Activated CD4-positive, alpha-beta T cell treated with anti-CD3 and anti-CD28 coated beads for 36 hours (primary cell): ENCODE measurements at regions of chr5 and their contacts with region 1.

Region 1: GRCh38 chr5:102536323-102536928 is 37.6 kb upstream of the SLCO6A1 start:
- DNase-seq: no peak
- ATAC-seq: no peak
- H3K4me3 Mint-ChIP-seq: no peak overlapping the region
- H3K27ac Mint-ChIP-seq: no peak overlapping the region
- H3K4me1 Mint-ChIP-seq: no peaks in the 10 kb centered on the region
- H3K27me3 Mint-ChIP-seq: peaks cover 4% of the 10 kb centered on the region

Region 2: DNA sequence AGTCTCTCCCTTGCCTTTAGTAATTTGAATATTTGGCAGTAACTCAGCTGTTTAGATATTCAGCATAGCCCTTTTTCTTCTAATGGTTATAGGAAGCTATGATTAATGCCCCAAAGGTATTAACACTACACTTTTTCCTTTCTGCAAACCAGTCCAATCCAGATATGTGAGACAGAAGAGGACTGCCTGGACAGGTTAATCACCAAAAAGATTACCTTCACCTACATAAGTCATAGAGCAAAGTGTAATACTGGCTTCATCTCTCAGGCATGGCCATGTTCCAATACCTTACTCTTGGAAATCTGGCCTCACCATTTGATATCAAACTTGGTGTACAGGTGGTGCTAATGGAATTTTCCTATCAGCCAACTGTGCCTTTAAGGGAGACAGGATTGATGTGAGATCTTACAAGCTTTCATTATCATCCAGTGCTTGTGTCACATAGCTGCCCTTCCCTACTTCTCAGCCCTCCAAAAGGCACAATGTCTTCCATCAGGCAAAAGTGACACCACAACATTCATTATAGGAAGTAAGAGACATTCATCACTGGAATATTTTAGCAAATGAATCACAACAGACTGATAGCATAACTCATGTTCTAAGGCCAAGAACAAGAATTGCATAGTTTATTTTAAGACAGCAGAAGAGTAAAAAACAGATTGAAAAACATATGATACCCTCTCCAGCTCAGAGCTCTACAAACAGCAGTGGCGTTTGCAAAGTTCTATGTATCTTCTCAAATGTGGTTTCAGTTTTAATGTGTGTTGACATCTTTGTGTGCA is 127.5 kb after region 1 on chr5:
- CTCF ChIA-PET with region 1: no interaction called
- POLR2A ChIA-PET with region 1: no interaction called
- intact Hi-C with region 1: loop called in 1 of 2 experiments (anchors 2 kb)
- DNase-seq: no peak
- ATAC-seq: no peak
- H3K4me3 Mint-ChIP-seq: no peak overlapping the region
- H3K27ac Mint-ChIP-seq: no peak overlapping the region
- H3K4me1 Mint-ChIP-seq: no peaks in the 10 kb centered on the region
- H3K27me3 Mint-ChIP-seq: peaks cover 1% of the 10 kb centered on the region

Region 3: DNA sequence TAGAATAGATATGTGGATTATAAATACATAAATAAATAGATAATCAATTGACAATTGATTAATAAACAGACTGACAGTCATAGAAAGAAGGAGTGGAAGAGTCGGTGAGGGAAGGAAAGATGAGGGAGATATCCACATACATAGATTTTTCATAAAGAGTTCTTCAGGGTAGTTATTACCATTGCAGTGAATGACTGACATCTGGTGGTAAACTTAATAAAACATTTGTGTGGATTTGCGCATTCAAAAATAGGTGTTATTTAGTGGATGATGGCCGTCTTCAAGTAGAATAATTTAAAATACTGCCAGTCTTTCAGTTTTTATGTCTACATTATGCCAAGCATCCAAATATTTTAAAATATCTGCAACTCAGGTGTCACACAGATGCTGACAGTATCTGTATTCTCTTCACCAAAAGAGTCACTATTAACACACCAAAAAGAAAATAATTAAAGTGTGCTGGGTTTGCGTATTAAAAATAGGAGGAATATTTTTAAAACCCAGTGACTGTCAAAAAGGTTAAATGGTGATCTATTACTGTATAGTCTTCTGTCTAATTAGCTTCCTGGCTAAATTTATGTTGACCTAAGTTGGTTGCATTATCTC is 504.7 kb after region 1 on chr5:
- CTCF ChIA-PET with region 1: no interaction called
- POLR2A ChIA-PET with region 1: no interaction called
- intact Hi-C with region 1: loop called (anchors 1 to 2 kb)
- DNase-seq: no peak
- ATAC-seq: no peak
- H3K4me3 Mint-ChIP-seq: no peak overlapping the region
- H3K27ac Mint-ChIP-seq: no peak overlapping the region
- H3K4me1 Mint-ChIP-seq: no peaks in the 10 kb centered on the region
- H3K27me3 Mint-ChIP-seq: no peaks in the 10 kb centered on the region

Region 4: DNA sequence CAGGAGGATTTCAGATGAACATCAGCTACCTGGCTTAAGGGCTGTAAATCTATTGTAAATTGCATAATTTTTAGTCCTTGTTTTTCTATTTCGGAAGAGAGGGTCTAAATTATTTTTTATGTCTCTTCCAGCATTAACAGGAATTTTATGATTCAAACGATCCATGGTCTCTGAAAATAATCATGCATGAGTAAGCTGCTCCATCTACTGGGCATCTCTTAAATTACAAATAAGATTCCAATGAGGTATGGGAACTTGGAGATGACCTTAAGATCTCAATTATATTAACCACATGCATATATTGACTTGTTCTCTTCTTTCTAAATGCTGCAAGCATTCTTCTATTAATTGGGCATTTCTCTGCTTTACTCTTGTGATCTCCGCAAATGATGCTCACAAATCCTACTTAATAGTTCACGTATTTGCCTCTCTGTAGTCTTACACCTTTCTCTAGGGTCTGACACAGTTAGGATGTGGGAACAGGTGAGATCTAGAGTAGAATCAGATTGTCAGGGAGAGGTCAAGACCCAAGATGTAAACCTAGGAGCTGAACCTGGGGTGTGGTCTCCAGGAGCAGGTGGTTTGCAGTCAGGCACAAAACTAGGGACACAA is 939.3 kb after region 1 on chr5:
- CTCF ChIA-PET with region 1: no interaction called
- POLR2A ChIA-PET with region 1: no interaction called
- intact Hi-C with region 1: loop called in 1 of 2 experiments (anchors 10 kb)
- DNase-seq: no peak
- ATAC-seq: no peak
- H3K4me3 Mint-ChIP-seq: no peak overlapping the region
- H3K27ac Mint-ChIP-seq: no peak overlapping the region
- H3K4me1 Mint-ChIP-seq: no peaks in the 10 kb centered on the region
- H3K27me3 Mint-ChIP-seq: peaks cover 6% of the 10 kb centered on the region